ENCODE measurements at regions of chr3 and their contacts with region 1.

Region 1: DNA sequence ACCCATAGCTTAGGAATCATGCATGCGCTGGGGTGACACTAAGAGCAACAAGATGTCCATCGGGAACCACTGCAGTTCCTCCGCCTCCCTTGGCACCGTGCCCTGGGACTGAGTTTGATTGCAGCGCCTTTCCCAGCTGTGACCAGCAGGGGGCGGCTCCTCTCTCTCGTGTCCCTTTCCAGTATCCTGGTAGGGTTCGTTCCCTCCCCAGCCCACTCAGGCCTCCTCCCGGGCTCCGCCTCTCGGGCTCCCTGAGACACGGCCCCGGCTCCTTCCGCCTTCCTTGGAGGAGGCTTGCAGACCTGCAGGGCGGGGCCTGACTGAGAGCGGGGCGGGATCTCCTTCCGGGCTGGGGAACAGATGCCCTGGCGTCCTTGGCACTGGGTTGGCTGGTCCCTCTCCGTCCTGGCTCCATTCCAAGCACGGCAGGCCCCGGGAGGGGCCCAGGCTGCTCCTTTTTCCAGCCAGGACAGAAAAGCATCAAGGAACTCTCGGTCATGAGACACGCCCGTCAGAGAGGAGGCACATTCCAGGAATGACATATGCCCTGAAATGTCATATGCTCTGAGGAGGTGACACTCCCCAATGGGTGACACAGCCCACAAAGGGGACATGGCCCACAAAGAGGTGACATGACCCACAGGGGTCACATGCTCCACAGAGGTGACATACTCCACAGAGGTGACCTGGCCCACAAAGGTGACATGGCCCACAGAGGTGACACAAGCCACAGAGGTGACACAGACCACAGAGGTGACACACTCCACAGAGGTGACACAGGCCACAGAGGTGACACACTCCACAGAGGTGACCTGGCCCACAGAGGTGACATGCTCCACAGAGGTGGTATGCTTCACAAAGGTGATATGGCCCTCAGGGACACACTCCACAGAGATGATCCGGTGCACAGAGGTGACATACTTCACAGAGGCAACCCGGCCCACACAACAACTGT is 79.0 kb downstream of the ABHD5 start:
- DNase-seq: peak; percentile 97
- H3K4me3 ChIP-seq: peak overlapping the region; percentile 6 to 42 (median 32)
- H3K27ac ChIP-seq: peak overlapping the region; percentile 55 to 73 (median 65)
- H3K4me1 ChIP-seq: peaks cover 0 to 30% (median 20%) of the 10 kb centered on the region in 4 donors
- H3K27me3 ChIP-seq: no peaks in the 10 kb centered on the region
- CTCF ChIP-seq: peak; percentile 71 to 88 (median 86)
- EP300 ChIP-seq: no peak
- POLR2A ChIP-seq: no peak

Region 2: GRCh38 chr3:44198284-44199269 is 428.8 kb after region 1 on chr3:
- intact Hi-C with region 1: loop called (anchors 5 kb)
- DNase-seq: no peak
- H3K4me3 ChIP-seq: no peak overlapping the region
- H3K27ac ChIP-seq: no peak overlapping the region
- H3K4me1 ChIP-seq: no peaks in the 10 kb centered on the region
- H3K27me3 ChIP-seq: no peaks in the 10 kb centered on the region
- CTCF ChIP-seq: peak; percentile 26 to 75 (median 54)
- EP300 ChIP-seq: no peak
- POLR2A ChIP-seq: no peak